ENCODE measurements at regions of chr4 and their contacts with region 1.

Region 1: DNA sequence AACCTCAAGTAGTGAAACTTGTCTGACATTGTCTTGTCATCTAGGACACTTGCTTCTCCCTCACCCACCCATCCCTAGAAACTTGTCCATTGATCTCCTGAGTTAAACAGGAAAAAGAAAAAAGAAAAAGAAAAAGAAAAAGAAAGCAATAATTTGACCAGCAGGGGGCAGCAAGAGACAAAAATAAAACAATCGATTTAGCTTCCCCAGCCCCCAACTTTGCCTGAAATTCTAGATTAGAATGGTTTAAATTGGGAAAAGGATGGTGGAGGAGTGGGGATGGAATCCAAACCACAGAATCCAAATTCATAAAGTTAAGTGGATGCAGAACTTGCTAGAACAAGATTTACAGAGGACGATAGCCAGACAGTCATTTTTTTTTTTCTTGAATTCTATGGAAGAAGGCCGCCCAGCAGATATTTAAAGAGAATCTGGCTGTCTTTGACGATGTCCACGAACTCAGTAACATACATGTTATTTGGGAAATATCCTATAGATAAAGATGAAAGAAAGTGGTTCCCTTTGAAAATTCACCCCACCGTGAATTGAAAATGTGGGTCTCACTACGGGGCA is 282.9 kb downstream of the USP46 start:
- DNase-seq: peak; percentile 14
- H3K4me3 Mint-ChIP-seq: no peak overlapping the region
- H3K27ac Mint-ChIP-seq: no peak overlapping the region
- H3K4me1 Mint-ChIP-seq: no peaks in the 10 kb centered on the region
- H3K27me3 Mint-ChIP-seq: peaks cover 48% of the 10 kb centered on the region
- CTCF ChIP-seq: peak; percentile 40

Region 2: DNA sequence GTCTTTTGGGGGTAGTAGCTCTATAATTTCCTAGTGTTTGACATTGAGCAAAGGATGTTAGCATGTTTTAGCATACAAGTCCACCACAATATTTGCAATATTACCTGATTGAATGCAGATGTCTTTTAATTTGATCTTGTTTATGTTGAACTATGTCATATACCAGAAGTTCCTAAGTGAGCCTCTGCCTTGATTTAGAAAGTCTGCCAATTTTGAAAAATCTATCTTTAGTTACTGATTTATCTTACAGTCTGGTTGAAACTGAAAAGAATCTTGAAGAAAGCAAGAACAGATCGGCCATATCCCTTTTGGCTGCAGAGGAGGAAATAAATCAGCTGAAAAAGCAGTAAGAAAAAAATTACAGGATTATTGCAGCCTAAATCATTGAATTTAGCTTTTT is 306.6 kb before region 1 on chr4:
- CTCF ChIA-PET with region 1: no interaction called
- intact Hi-C with region 1: no loop called
- DNase-seq: no peak
- H3K4me3 Mint-ChIP-seq: no peak overlapping the region
- H3K27ac Mint-ChIP-seq: no peak overlapping the region
- H3K4me1 Mint-ChIP-seq: no peaks in the 10 kb centered on the region
- H3K27me3 Mint-ChIP-seq: peaks cover 10% of the 10 kb centered on the region
- CTCF ChIP-seq: no peak

Region 3: GRCh38 chr4:52234561-52235440 is 141.4 kb before region 1 on chr4:
- CTCF ChIA-PET with region 1: no interaction called
- intact Hi-C with region 1: loop called (anchors 10 kb)
- DNase-seq: no peak
- H3K4me3 Mint-ChIP-seq: no peak overlapping the region
- H3K27ac Mint-ChIP-seq: no peak overlapping the region
- H3K4me1 Mint-ChIP-seq: no peaks in the 10 kb centered on the region
- H3K27me3 Mint-ChIP-seq: peaks cover 14% of the 10 kb centered on the region
- CTCF ChIP-seq: no peak

Region 4: DNA sequence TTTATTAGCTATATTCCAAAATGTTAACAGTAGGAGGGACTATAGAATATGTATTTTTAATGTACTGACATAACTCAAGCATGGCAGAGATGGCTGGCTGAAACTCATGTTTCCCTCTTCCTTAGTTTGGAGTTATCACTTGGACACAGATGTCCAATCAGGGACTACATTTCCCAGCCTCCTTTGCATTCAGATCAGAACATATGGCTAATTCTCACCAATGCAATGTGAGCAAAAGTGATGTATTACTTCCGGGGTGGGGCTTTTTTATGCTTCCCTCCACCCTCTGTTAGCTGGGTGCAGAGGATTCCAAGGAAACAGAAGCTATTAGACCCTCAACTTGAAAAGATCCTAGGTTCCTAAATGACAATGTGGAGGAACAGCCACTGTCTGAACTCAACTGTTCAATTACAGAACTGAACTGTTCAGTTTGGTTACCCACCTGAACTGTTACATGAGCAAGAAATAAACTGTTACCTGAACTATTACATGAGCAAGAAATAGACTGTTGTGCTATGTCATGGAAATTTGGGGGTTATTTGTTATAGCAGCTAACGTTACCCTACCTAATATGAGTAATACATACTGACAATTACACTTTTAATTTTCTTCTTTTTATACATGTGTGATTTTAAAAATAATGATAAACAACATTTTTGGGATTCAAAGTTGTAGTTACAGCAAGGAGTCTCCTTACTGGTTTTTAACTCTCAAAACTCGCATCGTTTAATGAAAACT is 404.6 kb after region 1 on chr4:
- CTCF ChIA-PET with region 1: no interaction called
- intact Hi-C with region 1: no loop called
- DNase-seq: no peak
- H3K4me3 Mint-ChIP-seq: no peak overlapping the region
- H3K27ac Mint-ChIP-seq: no peak overlapping the region
- H3K4me1 Mint-ChIP-seq: no peaks in the 10 kb centered on the region
- H3K27me3 Mint-ChIP-seq: peaks cover 11% of the 10 kb centered on the region
- CTCF ChIP-seq: no peak